GM23248 (cell line): ENCODE measurements at regions of chr17 and their contacts with region 1.

Region 1: GRCh38 chr17:15260376-15261257 is 4.5 kb downstream of the PMP22 start:
- DNase-seq: peak; percentile 92
- H3K4me3 ChIP-seq: peak overlapping the region; percentile 94
- H3K27ac ChIP-seq: peak overlapping the region; percentile 90
- H3K4me1 ChIP-seq: peaks cover 36% of the 10 kb centered on the region
- H3K27me3 ChIP-seq: no peaks in the 10 kb centered on the region

Region 2: DNA sequence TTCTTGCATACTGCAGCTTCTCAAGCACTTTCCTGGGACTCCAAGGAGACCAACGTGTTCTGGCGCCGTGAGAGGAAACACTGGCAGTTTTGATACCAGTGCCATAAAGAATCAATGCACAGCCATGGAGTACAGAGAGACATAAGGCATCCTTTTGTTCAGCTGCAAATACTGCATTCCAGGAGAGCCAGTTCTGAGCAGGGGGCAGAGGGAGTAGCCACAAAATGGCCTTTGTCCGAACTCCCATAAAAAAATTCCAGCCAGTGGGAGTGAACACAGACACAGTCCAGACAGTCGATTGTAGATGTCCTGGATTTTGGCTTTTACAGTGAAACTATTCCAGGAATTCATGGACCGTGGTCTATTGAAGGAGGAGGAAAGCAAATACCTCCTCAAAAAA is 117.0 kb after region 1 on chr17:
- in situ Hi-C with region 1: loop called (anchors 10 kb)
- DNase-seq: peak; percentile 38
- H3K4me3 ChIP-seq: peak overlapping the region; percentile 46
- H3K27ac ChIP-seq: peak overlapping the region; percentile 67
- H3K4me1 ChIP-seq: peaks cover 15% of the 10 kb centered on the region
- H3K27me3 ChIP-seq: no peaks in the 10 kb centered on the region

Region 3: GRCh38 chr17:15409721-15410250 is 149.2 kb after region 1 on chr17:
- in situ Hi-C with region 1: loop called (anchors 10 kb)
- DNase-seq: peak; percentile 98
- H3K4me3 ChIP-seq: peak overlapping the region; percentile 67
- H3K27ac ChIP-seq: peak overlapping the region; percentile 96
- H3K4me1 ChIP-seq: peaks cover 27% of the 10 kb centered on the region
- H3K27me3 ChIP-seq: no peaks in the 10 kb centered on the region

Region 4: GRCh38 chr17:15436473-15437302 is 176.1 kb after region 1 on chr17:
- in situ Hi-C with region 1: loop called (anchors 5 kb)
- DNase-seq: peak; percentile 37
- H3K4me3 ChIP-seq: no peak overlapping the region
- H3K27ac ChIP-seq: no peak overlapping the region
- H3K4me1 ChIP-seq: peaks cover 11% of the 10 kb centered on the region; the same call in 1 of the 2 replicates
- H3K27me3 ChIP-seq: no peaks in the 10 kb centered on the region